Common myeloid progenitor, CD34-positive (primary cell): ENCODE measurements at regions of chr17 and their contacts with region 1.

Region 1: DNA sequence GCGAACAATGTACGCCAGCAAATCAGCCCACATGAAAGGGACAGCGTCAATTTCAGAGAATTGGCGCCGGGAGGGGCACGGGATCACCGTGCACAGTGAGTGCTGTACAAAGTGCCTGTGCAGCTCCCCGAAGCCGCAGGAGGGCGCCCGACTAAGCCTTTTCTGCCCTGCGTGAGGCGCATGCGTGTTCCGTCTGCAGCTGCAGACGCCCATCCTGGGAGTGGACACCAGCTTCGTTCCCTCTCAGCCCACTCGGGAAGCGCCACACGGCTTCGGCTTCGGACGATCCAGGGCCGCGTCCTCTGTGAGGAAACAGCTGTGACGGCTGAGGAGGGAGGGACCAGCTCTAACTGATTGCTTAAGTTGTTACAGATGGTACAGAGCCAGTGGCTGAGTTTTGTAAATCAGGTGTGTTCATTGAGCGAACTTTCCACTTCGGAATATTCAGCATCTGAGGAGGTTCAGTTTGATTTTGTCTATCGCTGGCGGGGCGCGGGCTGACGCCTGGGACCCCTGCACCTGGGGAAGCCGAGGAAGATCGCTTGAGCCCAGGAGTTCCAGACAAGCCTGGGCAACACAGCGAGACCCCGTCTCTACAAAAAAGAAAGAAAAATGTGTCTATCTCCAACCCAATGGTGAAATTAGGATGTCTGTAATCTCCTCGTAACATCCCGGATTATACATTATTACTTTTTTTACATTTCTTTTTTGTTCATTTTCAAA is 15.4 kb upstream of the ZNF287 start:
- DNase-seq: peak; percentile 84 to 89 (median 88)
- H3K4me3 ChIP-seq: peak overlapping the region in 6 of 7 experiments; percentile 46 to 77 (median 62)
- H3K27ac ChIP-seq: no peak overlapping the region
- H3K4me1 ChIP-seq: peaks cover 0 to 17% (median 13%) of the 10 kb centered on the region in 4 experiments
- H3K27me3 ChIP-seq: peaks cover 5 to 34% (median 8%) of the 10 kb centered on the region in 5 experiments

Region 2: GRCh38 chr17:16407911-16408588 is 176.4 kb before region 1 on chr17:
- CTCF ChIA-PET with region 1: no interaction called
- POLR2A ChIA-PET with region 1: no interaction called
- DNase-seq: peak in 2 of 3 donors; percentile 66 to 67
- H3K4me3 ChIP-seq: peak overlapping the region in 3 of 7 experiments; percentile 19 to 55 (median 42)
- H3K27ac ChIP-seq: peak overlapping the region in 1 of 2 experiments; percentile 27
- H3K4me1 ChIP-seq: peaks cover 0 to 20% (median 11%) of the 10 kb centered on the region in 4 experiments
- H3K27me3 ChIP-seq: no peaks in the 10 kb centered on the region

Region 3: GRCh38 chr17:16537130-16537458 is 47.3 kb before region 1 on chr17:
- CTCF ChIA-PET with region 1: interaction called, 16 read pairs
- POLR2A ChIA-PET with region 1: interaction called, 4 read pairs
- DNase-seq: no peak
- H3K4me3 ChIP-seq: peak overlapping the region in 4 of 7 experiments; percentile 76 to 94 (median 88)
- H3K27ac ChIP-seq: no peak overlapping the region
- H3K4me1 ChIP-seq: peaks cover 2 to 16% (median 10%) of the 10 kb centered on the region in 4 experiments
- H3K27me3 ChIP-seq: no peaks in the 10 kb centered on the region

Region 4: GRCh38 chr17:16568541-16569357 is 15.7 kb before region 1 on chr17 and contains the start of gene ZNF287:
- CTCF ChIA-PET with region 1: interaction called, 11 read pairs
- POLR2A ChIA-PET with region 1: no interaction called
- DNase-seq: peak; percentile 89 to 91 (median 90)
- H3K4me3 ChIP-seq: peak within 1 kb of the TSS; percentile 32 to 86 (median 68)
- H3K27ac ChIP-seq: no peak within 1 kb of the TSS
- H3K4me1 ChIP-seq: peaks cover 0 to 8% (median 6%) of the 10 kb centered on the region in 4 experiments
- H3K27me3 ChIP-seq: peaks cover 0 to 1% (median 0%) of the 10 kb centered on the region in 5 experiments

Region 5: DNA sequence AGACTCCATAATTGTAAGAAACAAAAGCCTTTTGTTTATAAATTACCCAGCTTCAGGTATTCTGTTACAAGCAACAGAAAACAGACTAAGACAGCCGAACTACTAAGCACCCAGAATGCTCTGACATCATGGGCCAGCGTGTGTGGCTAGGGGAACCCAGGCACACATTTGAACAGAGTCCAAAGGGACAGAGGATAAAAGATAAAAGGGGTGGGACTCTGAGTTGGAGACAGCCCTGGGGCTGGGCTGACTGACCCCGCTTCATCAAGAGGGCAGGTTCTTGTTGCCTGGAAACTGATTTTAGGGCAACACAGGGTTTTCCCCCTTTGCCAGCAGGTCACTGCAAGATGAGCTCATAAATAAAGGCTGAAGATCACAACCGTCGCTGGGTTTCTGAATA is 15.1 kb after region 1 on chr17:
- CTCF ChIA-PET with region 1: no interaction called
- POLR2A ChIA-PET with region 1: no interaction called
- DNase-seq: no peak
- H3K4me3 ChIP-seq: no peak overlapping the region
- H3K27ac ChIP-seq: no peak overlapping the region
- H3K4me1 ChIP-seq: no peaks in the 10 kb centered on the region
- H3K27me3 ChIP-seq: no peaks in the 10 kb centered on the region

Region 6: GRCh38 chr17:16639438-16639837 is 55.0 kb after region 1 on chr17:
- CTCF ChIA-PET with region 1: no interaction called
- POLR2A ChIA-PET with region 1: no interaction called
- DNase-seq: no peak
- H3K4me3 ChIP-seq: no peak overlapping the region
- H3K27ac ChIP-seq: no peak overlapping the region
- H3K4me1 ChIP-seq: no peaks in the 10 kb centered on the region
- H3K27me3 ChIP-seq: no peaks in the 10 kb centered on the region